ENCODE measurements at regions of chr6 and their contacts with region 1.

Region 1: GRCh38 chr6:15911753-15912504 is 217.0 kb upstream of the MYLIP start:
- DNase-seq: peak; percentile 69
- H3K4me3 Mint-ChIP-seq: no peak overlapping the region
- H3K27ac Mint-ChIP-seq: no peak overlapping the region
- H3K4me1 Mint-ChIP-seq: peaks cover 31% of the 10 kb centered on the region
- H3K27me3 Mint-ChIP-seq: peaks cover 2% of the 10 kb centered on the region

Region 2: GRCh38 chr6:15299430-15300131 is 612.3 kb before region 1 on chr6:
- CTCF ChIA-PET with region 1: no interaction called
- intact Hi-C with region 1: no loop called
- DNase-seq: peak; percentile 36
- H3K4me3 Mint-ChIP-seq: no peak overlapping the region
- H3K27ac Mint-ChIP-seq: no peak overlapping the region
- H3K4me1 Mint-ChIP-seq: peaks cover 82% of the 10 kb centered on the region
- H3K27me3 Mint-ChIP-seq: no peaks in the 10 kb centered on the region

Region 3: GRCh38 chr6:15879382-15880261 is 32.3 kb before region 1 on chr6:
- CTCF ChIA-PET with region 1: no interaction called
- intact Hi-C with region 1: loop called (anchors 1 kb)
- DNase-seq: peak; percentile 84
- H3K4me3 Mint-ChIP-seq: peak overlapping the region; percentile 29
- H3K27ac Mint-ChIP-seq: peak overlapping the region; percentile 80
- H3K4me1 Mint-ChIP-seq: peaks cover 26% of the 10 kb centered on the region
- H3K27me3 Mint-ChIP-seq: no peaks in the 10 kb centered on the region

Region 4: GRCh38 chr6:15929685-15930084 is 17.8 kb after region 1 on chr6:
- CTCF ChIA-PET with region 1: no interaction called
- intact Hi-C with region 1: no loop called
- DNase-seq: no peak
- H3K4me3 Mint-ChIP-seq: no peak overlapping the region
- H3K27ac Mint-ChIP-seq: no peak overlapping the region
- H3K4me1 Mint-ChIP-seq: no peaks in the 10 kb centered on the region
- H3K27me3 Mint-ChIP-seq: no peaks in the 10 kb centered on the region

Region 5: DNA sequence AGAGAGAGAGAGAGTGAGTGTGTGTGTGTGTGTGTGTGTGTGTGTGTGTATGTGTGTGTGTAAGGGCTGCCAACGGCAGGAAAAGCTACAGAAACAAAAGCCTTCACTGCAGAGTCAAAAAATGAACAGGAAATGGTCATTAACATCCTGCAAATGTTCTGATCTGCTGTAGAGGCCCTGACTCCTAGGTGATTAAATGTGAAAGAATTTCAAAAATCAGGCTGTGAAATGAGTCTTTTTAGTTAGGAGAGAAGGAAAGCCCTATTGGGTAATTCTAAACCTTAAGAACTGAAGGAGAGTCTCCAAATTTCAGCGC is 50.5 kb after region 1 on chr6:
- CTCF ChIA-PET with region 1: no interaction called
- intact Hi-C with region 1: loop called (anchors 1 kb)
- DNase-seq: peak; percentile 45
- H3K4me3 Mint-ChIP-seq: no peak overlapping the region
- H3K27ac Mint-ChIP-seq: peak overlapping the region; percentile 20
- H3K4me1 Mint-ChIP-seq: peaks cover 12% of the 10 kb centered on the region
- H3K27me3 Mint-ChIP-seq: no peaks in the 10 kb centered on the region

Region 6: GRCh38 chr6:16471222-16471909 is 559.4 kb after region 1 on chr6:
- CTCF ChIA-PET with region 1: no interaction called
- intact Hi-C with region 1: loop called (anchors 10 kb)
- DNase-seq: no peak
- H3K4me3 Mint-ChIP-seq: no peak overlapping the region
- H3K27ac Mint-ChIP-seq: peak overlapping the region; percentile 68
- H3K4me1 Mint-ChIP-seq: peaks cover 60% of the 10 kb centered on the region
- H3K27me3 Mint-ChIP-seq: no peaks in the 10 kb centered on the region

Region 7: DNA sequence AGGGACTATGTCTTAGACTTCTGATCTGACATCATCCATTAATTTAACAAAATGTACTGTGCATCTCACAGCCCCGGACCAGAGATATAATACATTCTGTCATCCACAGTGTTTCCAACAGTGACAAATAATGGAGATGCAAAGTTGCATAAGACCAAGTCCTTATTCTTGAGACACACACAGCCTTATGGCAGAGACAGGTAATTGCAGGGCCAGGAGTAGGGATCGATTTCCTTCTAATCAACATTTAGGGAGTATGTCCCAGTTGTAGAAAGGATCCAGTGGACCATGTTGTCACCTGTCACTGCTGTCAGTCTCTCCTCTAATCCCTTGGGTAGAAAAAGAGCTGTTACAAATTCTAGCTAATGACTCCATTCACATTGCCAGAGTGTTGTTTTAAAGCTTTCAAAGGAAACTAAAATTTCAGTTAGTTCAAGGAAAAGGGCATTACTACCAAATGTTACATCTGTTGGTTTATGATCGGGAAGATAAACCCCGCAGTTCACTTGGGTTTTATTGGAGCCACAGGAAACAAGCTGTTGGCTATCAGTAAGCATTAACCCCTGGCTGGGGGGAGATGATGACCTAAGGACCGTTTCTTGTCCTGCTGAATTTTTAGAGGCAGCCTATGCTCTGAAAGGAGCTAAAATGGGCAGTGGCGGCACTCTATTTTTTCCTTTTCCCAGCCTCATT is 960.8 kb after region 1 on chr6:
- CTCF ChIA-PET with region 1: no interaction called
- intact Hi-C with region 1: no loop called
- DNase-seq: no peak
- H3K4me3 Mint-ChIP-seq: no peak overlapping the region
- H3K27ac Mint-ChIP-seq: no peak overlapping the region
- H3K4me1 Mint-ChIP-seq: no peaks in the 10 kb centered on the region
- H3K27me3 Mint-ChIP-seq: peaks cover 40% of the 10 kb centered on the region